Activated CD4-positive, alpha-beta memory T cell treated with anti-CD3 and anti-CD28 coated beads for 36 hours (primary cell): ENCODE measurements at regions of chr4 and their contacts with region 1.

Region 1: DNA sequence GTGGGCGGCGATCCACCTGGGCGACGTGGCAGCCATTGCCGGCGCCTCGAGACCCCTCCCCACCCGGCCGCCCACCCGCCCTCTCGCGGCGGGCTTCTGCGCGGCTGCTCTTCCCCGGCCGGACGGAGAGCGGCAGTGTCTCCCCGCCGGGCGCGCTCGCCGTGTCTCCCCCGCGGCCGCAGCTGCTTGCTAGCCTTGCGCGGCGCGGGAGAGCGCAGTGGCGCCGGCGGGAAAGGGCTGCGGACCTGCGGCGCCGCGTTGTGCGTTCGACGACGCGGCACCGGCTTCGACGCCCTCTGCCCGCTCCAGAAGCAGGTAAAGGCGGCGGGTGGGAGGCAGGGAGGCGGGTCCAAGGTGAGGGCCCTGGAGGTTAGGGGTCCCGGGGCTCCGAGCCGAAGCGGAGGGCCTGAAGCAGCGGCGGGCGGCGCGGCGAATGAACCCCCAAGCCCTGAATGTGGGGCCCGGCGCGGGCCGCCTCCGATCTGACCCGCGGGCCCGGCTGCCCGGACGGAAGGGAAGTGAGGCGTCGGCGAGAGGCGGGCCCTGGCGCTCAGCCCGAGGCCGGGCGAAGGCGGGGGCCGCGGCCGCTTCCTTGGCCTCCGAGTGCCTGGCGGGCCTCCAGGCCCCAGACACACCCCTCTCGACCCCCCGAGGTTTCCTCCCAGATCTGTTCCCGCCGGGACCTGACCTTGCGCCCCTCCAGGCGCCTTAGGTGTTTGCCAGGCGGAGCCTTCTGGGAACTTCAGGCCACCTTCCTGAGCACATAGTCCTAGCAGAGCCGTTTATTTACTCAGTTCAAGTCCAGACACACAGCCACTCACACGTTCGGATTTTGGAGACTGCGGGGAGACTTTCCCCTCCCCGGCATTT is at the start of gene N4BP2:
- DNase-seq: peak; percentile 78
- H3K4me3 Mint-ChIP-seq: peak within 1 kb of the TSS; percentile 92
- H3K27ac Mint-ChIP-seq: peak within 1 kb of the TSS; percentile 98
- H3K4me1 Mint-ChIP-seq: peaks cover 32% of the 10 kb centered on the region
- H3K27me3 Mint-ChIP-seq: no peaks in the 10 kb centered on the region
- total RNA-seq, gene N4BP2: 19.3 to 21.9 TPM

Region 2: DNA sequence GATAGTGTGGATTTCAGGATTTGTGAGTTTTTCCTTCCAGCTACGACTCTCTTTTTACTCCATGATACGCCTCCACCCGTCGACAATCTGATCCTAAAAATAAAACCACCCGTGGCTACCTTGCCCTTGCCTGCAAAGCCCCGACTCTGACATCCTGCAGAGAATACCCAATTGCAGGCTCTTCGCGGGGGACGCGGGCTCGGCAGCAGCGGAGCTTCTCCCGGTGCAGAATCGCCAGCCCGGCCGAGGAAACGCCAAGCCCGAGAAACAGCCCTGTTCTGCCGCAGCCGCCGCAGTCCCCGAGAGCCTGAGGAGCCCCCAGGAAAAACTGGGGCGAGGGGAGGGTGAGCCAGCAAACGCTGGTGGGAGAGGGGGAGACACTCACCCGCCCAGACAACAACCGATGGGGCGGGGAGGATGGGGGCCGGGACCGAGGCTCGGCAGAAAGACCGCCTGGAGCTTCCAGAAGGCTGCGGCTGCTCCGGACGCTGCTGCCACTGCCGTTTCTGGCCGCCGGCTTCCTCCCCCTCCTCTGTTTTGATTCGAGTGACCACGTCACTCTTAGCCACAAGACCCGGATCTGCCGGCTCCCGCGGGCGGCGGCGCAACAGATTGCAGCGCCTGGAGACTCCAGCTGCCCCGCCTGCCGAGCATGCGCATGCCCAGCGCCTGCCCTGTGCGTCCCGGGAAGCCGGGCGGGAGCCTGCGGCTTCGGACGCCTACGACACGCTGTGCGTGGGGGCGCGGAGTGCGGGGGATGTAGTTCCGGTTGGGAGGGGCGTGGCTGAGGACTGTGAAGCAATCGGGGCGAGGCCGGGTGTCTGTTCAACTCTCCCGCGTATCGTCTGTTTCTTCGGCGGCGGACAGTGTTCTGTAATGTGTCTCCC is 418.4 kb before region 1 on chr4 and contains the start of gene SMIM14:
- CTCF ChIA-PET with region 1: no interaction called
- POLR2A ChIA-PET with region 1: no interaction called
- intact Hi-C with region 1: loop called (anchors 1 kb)
- DNase-seq: peak; percentile 96
- H3K4me3 Mint-ChIP-seq: peak within 1 kb of the TSS; percentile 93
- H3K27ac Mint-ChIP-seq: peak within 1 kb of the TSS; percentile 63
- H3K4me1 Mint-ChIP-seq: peaks cover 34% of the 10 kb centered on the region
- H3K27me3 Mint-ChIP-seq: no peaks in the 10 kb centered on the region
- total RNA-seq, gene SMIM14: 4.9 to 5.6 TPM

Region 3: DNA sequence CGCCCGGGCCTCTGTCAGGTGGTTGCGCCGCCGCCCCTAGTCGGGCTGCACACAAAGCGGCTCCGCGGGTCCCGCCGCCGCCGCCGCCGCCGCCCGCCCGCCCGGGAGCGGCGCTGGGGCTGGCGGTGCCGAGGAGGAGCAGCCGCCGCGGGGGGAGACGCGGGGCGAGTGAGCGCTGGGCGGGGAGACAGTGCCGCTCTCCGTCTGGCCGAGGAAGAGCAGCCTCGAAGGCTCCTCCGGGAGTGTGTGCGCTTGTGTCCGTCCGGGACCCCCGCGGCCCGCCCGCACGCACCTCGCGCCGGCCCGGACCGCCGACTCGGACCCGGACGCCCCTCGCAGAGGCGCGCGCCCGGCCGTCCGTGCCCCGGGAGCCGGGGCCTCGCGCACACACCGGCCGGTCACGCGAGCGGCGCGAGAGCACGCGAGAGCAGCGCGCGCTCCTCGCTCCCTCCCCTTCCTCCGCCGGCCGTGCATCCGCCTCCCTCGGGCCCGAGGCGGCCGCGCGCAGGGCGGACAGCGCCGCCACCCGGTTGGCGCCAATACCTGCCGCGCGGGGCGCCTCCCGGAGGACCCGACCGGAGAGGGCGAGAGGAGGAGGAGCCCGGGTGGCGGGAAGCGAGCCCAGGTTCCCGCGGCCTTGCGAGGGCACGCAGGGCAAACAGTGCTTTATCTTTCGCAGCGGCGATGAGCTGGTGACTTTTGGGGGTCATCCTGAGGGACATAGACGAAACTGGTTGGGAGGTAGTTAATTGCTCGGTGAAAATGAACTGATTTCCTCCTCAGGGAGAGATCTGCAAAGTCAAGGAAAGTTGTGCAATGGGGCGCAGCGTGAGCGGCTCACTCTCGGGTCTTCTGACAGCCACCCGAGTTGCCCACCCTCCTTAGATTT is 79.2 kb before region 1 on chr4 and contains the start of gene PDS5A:
- CTCF ChIA-PET with region 1: interaction called, 6 read pairs
- POLR2A ChIA-PET with region 1: interaction called, 6 read pairs
- intact Hi-C with region 1: loop called (anchors 1 kb)
- DNase-seq: peak; percentile 93
- H3K4me3 Mint-ChIP-seq: peak within 1 kb of the TSS; percentile 94
- H3K27ac Mint-ChIP-seq: peak within 1 kb of the TSS; percentile 99
- H3K4me1 Mint-ChIP-seq: peaks cover 38% of the 10 kb centered on the region
- H3K27me3 Mint-ChIP-seq: no peaks in the 10 kb centered on the region
- total RNA-seq, gene PDS5A: 101 to 103 TPM

Region 4: DNA sequence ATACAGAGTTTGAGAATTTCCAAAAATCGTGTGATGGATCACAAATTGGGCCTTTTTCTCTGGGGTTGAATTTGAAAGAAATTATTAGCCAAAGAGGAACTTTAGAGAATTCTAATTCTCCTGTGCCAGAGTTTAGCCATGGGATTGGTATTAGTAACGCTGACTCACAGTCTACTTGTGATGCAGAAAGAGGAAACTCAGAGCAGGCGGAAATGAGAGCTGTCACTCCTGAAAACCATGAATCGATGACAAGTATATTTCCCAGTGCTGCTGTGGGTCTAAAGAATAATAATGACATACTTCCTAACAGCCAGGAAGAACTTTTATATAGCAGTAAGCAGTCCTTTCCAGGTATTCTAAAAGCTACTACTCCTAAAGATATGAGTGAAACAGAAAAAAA is 64.6 kb after region 1 on chr4:
- CTCF ChIA-PET with region 1: interaction called, 5 read pairs
- POLR2A ChIA-PET with region 1: interaction called, 4 read pairs
- intact Hi-C with region 1: loop called (anchors 5 kb)
- DNase-seq: peak; percentile 35
- H3K4me3 Mint-ChIP-seq: no peak overlapping the region
- H3K27ac Mint-ChIP-seq: peak overlapping the region; percentile 16
- H3K4me1 Mint-ChIP-seq: peaks cover 44% of the 10 kb centered on the region
- H3K27me3 Mint-ChIP-seq: no peaks in the 10 kb centered on the region

Region 5: GRCh38 chr4:40316782-40317635 is 260.1 kb after region 1 on chr4:
- CTCF ChIA-PET with region 1: interaction called, 16 read pairs
- POLR2A ChIA-PET with region 1: interaction called, 14 read pairs
- intact Hi-C with region 1: no loop called
- DNase-seq: peak; percentile 77
- H3K4me3 Mint-ChIP-seq: peak overlapping the region; percentile 78
- H3K27ac Mint-ChIP-seq: peak overlapping the region; percentile 94
- H3K4me1 Mint-ChIP-seq: peaks cover 36% of the 10 kb centered on the region
- H3K27me3 Mint-ChIP-seq: no peaks in the 10 kb centered on the region

Region 6: DNA sequence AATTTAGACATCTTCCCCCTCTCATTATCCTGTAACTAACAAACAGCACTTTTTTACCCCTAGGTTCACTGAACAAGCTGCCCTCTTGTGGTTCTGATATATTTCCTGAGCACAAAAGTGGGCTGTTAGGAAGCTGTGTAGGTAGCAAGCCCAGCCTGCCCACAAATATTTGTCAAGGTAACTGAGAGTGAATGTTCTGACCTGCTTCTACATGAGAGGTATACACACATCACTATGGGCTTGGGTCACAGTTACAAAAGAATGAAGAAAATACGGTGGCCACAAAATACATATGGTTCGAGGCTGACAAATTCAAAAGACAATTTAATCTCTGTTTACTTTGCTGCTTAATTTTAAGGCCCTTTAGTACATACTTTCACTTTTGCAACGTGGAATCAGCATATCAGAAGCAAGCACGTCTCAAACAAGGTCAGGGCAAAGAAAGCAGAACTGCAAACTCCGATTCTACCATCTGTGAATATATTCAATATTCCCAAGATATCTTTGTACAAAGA is 494.1 kb after region 1 on chr4:
- CTCF ChIA-PET with region 1: no interaction called
- POLR2A ChIA-PET with region 1: no interaction called
- intact Hi-C with region 1: loop called (anchors 5 kb)
- DNase-seq: no peak
- H3K4me3 Mint-ChIP-seq: peak overlapping the region; percentile 49
- H3K27ac Mint-ChIP-seq: no peak overlapping the region
- H3K4me1 Mint-ChIP-seq: peaks cover 22% of the 10 kb centered on the region
- H3K27me3 Mint-ChIP-seq: no peaks in the 10 kb centered on the region